ENCODE measurements at regions of chr15 and their contacts with region 1.

Region 1: DNA sequence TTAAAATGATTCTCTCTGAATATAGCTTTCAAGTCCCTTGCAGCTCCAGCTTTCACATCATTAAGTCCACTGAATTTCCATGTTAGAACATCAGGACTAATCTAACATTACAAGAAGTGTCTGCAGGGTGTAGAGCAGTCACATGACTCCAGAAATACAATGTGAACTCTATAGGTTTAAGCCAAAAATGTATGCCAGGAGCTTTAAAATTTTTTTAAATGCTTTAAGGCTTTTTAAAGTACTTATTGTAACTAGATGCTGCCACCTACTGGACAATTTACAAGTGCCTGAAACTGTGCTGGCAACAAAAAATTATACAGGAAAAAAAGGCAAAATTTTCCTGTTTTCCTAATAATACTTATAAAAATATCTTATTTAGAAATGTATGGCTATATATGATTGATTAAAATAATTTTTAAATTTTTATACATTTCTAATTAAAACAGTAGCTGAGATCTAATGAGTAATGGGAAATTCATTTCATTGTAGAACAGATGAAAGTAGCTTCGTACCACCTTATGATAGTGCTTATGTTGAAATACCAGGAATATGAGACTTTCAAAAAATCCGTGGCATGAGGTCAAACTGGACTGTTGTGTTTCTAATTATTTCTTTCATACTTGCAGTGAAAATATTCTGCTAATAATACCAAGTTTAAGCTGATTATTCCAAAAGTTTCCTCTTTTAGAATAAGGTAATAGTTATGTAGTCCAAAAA is 25.7 kb downstream of the FSIP1 start:
- DNase-seq: no peak
- ATAC-seq: no peak

Region 2: GRCh38 chr15:38707802-38708671 is 1048.9 kb before region 1 on chr15:
- intact Hi-C with region 1: loop called (anchors 5 kb)
- DNase-seq: no peak
- ATAC-seq: peak; percentile 70

Region 3: DNA sequence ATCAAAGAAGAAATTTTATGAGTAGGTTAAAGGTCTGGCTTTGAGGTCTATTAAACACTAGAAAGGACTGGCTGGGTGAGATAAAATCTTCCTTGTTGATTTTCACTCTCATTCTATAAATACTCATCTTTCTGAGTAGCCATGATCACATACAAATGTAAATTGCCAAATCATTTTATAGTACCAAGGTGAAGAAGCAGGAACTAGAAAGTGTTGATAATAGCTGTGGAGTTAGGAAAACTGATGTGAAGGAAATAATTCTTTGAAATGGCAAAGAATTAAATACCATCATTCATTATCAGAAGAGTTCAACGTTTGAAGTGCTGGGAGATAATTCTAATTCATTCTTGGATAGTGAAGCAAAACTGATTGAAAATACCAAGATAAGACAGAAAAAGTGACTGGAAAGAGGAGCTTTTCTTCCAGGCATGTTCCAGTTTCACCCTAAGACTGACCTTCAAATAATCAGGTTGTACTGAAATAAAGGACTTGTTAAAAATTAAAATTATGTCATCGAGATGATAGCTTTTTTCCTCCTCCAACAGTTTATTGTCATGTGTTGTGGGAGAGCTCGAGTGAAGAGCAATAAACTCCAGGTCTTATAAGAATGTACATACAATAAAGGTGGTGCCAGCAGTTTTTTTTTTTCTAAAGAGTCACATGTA is 158.6 kb before region 1 on chr15:
- intact Hi-C with region 1: loop called (anchors 5 kb)
- DNase-seq: no peak
- ATAC-seq: no peak

Region 4: DNA sequence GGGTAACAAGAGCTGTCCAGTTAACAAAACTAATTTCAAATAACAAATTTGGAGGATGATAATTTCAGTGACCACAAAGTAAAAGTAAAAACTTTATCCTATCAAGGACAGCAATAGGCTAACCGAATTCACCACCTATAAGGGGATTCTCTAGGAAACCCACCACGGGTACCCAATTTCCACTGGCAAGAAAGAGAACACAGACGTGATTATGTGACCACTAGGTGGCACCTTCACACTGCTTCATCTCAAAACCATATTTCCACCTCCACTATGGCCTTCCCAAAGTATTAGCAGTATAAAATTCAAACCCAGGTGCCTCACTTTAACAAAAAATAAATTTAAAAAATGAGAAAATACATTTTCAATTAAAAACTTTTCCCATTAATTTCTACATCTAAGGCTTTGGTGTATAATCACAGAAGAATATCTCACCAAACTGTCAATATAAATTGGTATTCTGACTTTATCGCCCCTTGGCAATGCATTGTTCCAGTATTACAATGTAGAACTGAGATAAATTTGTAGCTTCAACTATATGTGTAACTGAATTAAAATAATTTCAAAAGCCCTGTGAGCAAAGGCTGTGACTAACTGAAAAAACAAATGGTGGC is 70.9 kb before region 1 on chr15:
- intact Hi-C with region 1: loop called (anchors 1 kb)
- DNase-seq: no peak
- ATAC-seq: peak; percentile 52

Measured in Right ventricle myocardium inferior (tissue), 1 donor.